CD8-positive, alpha-beta T cell (primary cell): ENCODE measurements at regions of chr1 and their contacts with region 1.

Region 1: GRCh38 chr1:40338745-40339424 is 21.8 kb upstream of the COL9A2 start:
- DNase-seq: peak; percentile 80 to 95 (median 89)
- ATAC-seq: peak; percentile 98
- H3K4me3 ChIP-seq: no peak overlapping the region
- H3K4me3 Mint-ChIP-seq: peak overlapping the region; percentile 42
- H3K27ac ChIP-seq: no peak overlapping the region
- H3K27ac Mint-ChIP-seq: peak overlapping the region; percentile 10
- H3K4me1 ChIP-seq: peaks cover 25% of the 10 kb centered on the region
- H3K4me1 Mint-ChIP-seq: peaks cover 41% of the 10 kb centered on the region
- H3K27me3 ChIP-seq: no peaks in the 10 kb centered on the region
- H3K27me3 Mint-ChIP-seq: no peaks in the 10 kb centered on the region
- CTCF ChIP-seq: peak; percentile 94

Region 2: DNA sequence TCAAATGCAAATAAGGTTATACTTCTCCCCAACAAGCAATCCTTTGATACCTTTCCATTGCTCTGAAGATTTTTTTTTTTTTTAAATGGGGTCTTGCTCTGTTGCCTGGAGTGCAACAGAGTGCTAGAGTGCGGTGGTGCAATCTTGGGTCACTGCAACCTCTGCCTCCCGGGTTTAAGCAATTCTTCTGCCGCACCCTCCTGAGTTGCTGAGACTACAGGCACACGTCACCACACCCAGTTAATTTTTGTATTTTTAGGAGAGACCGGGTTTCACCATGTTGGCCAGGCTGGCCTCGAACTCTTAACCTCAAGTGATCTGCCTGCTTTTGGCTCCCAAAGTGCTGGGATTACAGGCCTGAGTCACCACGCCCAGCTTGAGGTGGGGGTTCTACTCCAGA is 534.9 kb before region 1 on chr1:
- CTCF ChIA-PET with region 1: no interaction called
- POLR2A ChIA-PET with region 1: no interaction called
- intact Hi-C with region 1: no loop called
- DNase-seq: no peak
- ATAC-seq: no peak
- H3K4me3 ChIP-seq: no peak overlapping the region
- H3K4me3 Mint-ChIP-seq: no peak overlapping the region
- H3K27ac ChIP-seq: no peak overlapping the region
- H3K27ac Mint-ChIP-seq: no peak overlapping the region
- H3K4me1 ChIP-seq: peaks cover 2% of the 10 kb centered on the region
- H3K4me1 Mint-ChIP-seq: peaks cover 6% of the 10 kb centered on the region
- H3K27me3 ChIP-seq: no peaks in the 10 kb centered on the region
- H3K27me3 Mint-ChIP-seq: no peaks in the 10 kb centered on the region
- CTCF ChIP-seq: no peak

Region 3: DNA sequence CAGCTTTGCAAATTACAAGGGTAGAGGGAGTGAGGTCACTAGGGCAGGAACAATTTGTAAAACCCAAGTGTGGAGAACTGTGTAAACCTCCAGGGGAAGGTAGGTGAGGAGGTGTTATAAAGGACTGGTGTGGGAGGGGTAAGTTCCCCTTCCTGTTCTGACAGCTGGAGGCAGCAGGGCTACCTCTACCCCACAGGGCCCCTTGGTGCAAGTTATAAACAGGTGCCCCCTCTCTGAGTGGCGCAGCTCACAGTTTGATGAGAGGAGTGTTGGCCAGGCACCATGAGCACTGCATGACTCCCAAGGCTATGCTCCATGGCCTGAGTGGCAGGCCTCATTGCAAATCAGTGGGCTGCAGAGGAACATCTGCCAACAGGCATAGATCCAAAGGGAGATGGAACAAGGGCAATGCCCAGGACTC is 342.9 kb before region 1 on chr1:
- CTCF ChIA-PET with region 1: no interaction called
- POLR2A ChIA-PET with region 1: no interaction called
- intact Hi-C with region 1: no loop called
- DNase-seq: peak in 8 of 9 experiments; percentile 5 to 67 (median 22)
- ATAC-seq: peak; percentile 93
- H3K4me3 ChIP-seq: no peak overlapping the region
- H3K4me3 Mint-ChIP-seq: no peak overlapping the region
- H3K27ac ChIP-seq: peak overlapping the region in 1 of 2 experiments; percentile 4
- H3K27ac Mint-ChIP-seq: peak overlapping the region; percentile 30
- H3K4me1 ChIP-seq: peaks cover 11% of the 10 kb centered on the region
- H3K4me1 Mint-ChIP-seq: peaks cover 22% of the 10 kb centered on the region
- H3K27me3 ChIP-seq: no peaks in the 10 kb centered on the region
- H3K27me3 Mint-ChIP-seq: no peaks in the 10 kb centered on the region
- CTCF ChIP-seq: no peak

Region 4: GRCh38 chr1:40078512-40079333 is 260.2 kb before region 1 on chr1:
- CTCF ChIA-PET with region 1: interaction called, 46 read pairs
- POLR2A ChIA-PET with region 1: no interaction called
- intact Hi-C with region 1: loop called (anchors 1 kb)
- DNase-seq: peak in 8 of 9 experiments; percentile 13 to 77 (median 50)
- ATAC-seq: peak; percentile 89
- H3K4me3 ChIP-seq: no peak overlapping the region
- H3K4me3 Mint-ChIP-seq: no peak overlapping the region
- H3K27ac ChIP-seq: no peak overlapping the region
- H3K27ac Mint-ChIP-seq: peak overlapping the region; percentile 56
- H3K4me1 ChIP-seq: peaks cover 4% of the 10 kb centered on the region
- H3K4me1 Mint-ChIP-seq: peaks cover 11% of the 10 kb centered on the region
- H3K27me3 ChIP-seq: no peaks in the 10 kb centered on the region
- H3K27me3 Mint-ChIP-seq: no peaks in the 10 kb centered on the region
- CTCF ChIP-seq: peak; percentile 88

Region 5: DNA sequence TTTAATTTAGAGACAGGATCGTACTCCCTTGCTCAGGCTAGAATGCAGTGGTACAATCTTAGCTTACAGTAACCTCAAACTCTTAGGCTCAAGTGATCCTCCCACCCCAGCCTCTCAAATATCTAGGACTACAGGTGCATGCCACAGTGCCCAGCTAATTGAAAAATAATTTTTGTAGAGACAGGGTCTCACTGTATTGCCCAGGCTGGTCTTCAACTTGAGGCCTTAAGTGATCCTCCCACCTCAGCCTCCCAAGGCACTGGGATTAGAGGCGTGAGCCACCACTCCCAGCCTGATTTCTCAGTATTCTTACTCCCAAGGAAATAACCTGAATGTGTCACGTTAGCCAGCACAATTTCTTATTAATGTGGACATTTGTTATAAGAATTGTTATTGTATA is 167.8 kb before region 1 on chr1:
- CTCF ChIA-PET with region 1: interaction called, 10 read pairs
- POLR2A ChIA-PET with region 1: no interaction called
- intact Hi-C with region 1: no loop called
- DNase-seq: no peak
- ATAC-seq: no peak
- H3K4me3 ChIP-seq: no peak overlapping the region
- H3K4me3 Mint-ChIP-seq: no peak overlapping the region
- H3K27ac ChIP-seq: no peak overlapping the region
- H3K27ac Mint-ChIP-seq: no peak overlapping the region
- H3K4me1 ChIP-seq: peaks cover 37% of the 10 kb centered on the region
- H3K4me1 Mint-ChIP-seq: peaks cover 59% of the 10 kb centered on the region
- H3K27me3 ChIP-seq: no peaks in the 10 kb centered on the region
- H3K27me3 Mint-ChIP-seq: no peaks in the 10 kb centered on the region
- CTCF ChIP-seq: no peak

Region 6: DNA sequence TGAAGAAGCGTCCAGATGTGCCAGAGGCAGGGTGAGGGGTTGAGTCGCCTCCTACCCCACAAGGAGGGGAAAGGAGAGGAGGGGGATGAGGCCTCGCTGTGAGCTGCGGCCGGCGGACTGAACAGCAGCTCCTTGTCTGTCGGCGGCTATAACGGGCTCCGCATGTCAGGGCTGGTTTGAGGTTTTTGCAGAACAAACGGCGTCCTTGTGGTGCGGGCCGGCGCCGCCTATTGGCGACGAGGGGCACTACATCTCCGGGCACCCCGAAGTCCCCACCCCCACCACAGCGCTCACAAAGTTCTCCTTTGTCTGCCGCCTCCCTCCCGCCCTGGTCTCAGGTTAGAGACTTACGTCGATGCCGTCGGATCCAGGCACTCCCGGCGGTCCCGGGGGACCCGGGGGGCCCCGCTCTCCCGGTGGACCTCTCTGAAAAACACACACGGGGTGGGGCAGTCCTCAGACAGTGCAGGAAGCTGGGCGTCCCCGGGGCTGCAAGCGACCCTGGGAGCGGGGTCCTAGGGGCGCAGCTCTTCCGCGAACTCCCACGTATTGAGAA is 23.6 kb before region 1 on chr1:
- CTCF ChIA-PET with region 1: interaction called, 116 read pairs
- POLR2A ChIA-PET with region 1: interaction called, 5 read pairs
- intact Hi-C with region 1: loop called in 1 of 2 experiments (anchors 1 kb)
- DNase-seq: peak; percentile 71 to 92 (median 85)
- ATAC-seq: peak; percentile 81
- H3K4me3 ChIP-seq: peak overlapping the region; percentile 54 to 84
- H3K4me3 Mint-ChIP-seq: peak overlapping the region; percentile 84
- H3K27ac ChIP-seq: peak overlapping the region in 1 of 2 experiments; percentile 24
- H3K27ac Mint-ChIP-seq: peak overlapping the region; percentile 29
- H3K4me1 ChIP-seq: peaks cover 14% of the 10 kb centered on the region
- H3K4me1 Mint-ChIP-seq: peaks cover 27% of the 10 kb centered on the region
- H3K27me3 ChIP-seq: peaks cover 0 to 13% of the 10 kb centered on the region in 2 experiments
- H3K27me3 Mint-ChIP-seq: peaks cover 7% of the 10 kb centered on the region
- CTCF ChIP-seq: peak; percentile 95

Region 7: GRCh38 chr1:40385437-40386358 is 46.8 kb after region 1 on chr1:
- CTCF ChIA-PET with region 1: interaction called, 109 read pairs
- POLR2A ChIA-PET with region 1: interaction called, 4 read pairs
- intact Hi-C with region 1: no loop called
- DNase-seq: peak in 7 of 9 experiments; percentile 34 to 96 (median 64)
- ATAC-seq: peak; percentile 66
- H3K4me3 ChIP-seq: peak overlapping the region; percentile 29 to 50
- H3K4me3 Mint-ChIP-seq: peak overlapping the region; percentile 86
- H3K27ac ChIP-seq: peak overlapping the region; percentile 93 to 97
- H3K27ac Mint-ChIP-seq: peak overlapping the region; percentile 100
- H3K4me1 ChIP-seq: peaks cover 82% of the 10 kb centered on the region
- H3K4me1 Mint-ChIP-seq: peaks cover 92% of the 10 kb centered on the region
- H3K27me3 ChIP-seq: no peaks in the 10 kb centered on the region
- H3K27me3 Mint-ChIP-seq: no peaks in the 10 kb centered on the region
- CTCF ChIP-seq: no peak

Region 8: DNA sequence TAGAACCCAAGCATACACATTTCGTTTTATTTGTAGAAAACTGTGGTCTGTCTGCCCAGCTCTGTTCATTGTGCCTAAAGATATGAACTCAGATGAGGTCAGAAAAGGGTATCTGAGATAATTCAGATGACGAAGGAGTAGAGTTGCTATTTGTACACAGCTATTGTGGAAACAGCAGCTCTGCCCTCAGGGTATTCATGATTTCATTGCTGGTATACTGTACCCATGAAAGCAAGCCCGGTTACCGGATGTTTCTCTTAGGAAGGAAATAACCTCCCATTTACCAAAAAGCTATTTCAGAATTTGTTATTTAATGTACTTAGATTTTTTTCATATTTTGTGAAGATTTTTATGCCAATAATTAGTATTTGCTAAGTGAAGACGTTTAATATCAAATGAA is 72.4 kb after region 1 on chr1:
- CTCF ChIA-PET with region 1: interaction called, 158 read pairs
- POLR2A ChIA-PET with region 1: interaction called, 3 read pairs
- intact Hi-C with region 1: no loop called
- DNase-seq: peak in 1 of 9 experiments; percentile 39
- ATAC-seq: no peak
- H3K4me3 ChIP-seq: no peak overlapping the region
- H3K4me3 Mint-ChIP-seq: no peak overlapping the region
- H3K27ac ChIP-seq: peak overlapping the region in 1 of 2 experiments; percentile 25
- H3K27ac Mint-ChIP-seq: peak overlapping the region; percentile 60
- H3K4me1 ChIP-seq: peaks cover 34% of the 10 kb centered on the region
- H3K4me1 Mint-ChIP-seq: peaks cover 54% of the 10 kb centered on the region
- H3K27me3 ChIP-seq: no peaks in the 10 kb centered on the region
- H3K27me3 Mint-ChIP-seq: no peaks in the 10 kb centered on the region
- CTCF ChIP-seq: no peak

Region 9: DNA sequence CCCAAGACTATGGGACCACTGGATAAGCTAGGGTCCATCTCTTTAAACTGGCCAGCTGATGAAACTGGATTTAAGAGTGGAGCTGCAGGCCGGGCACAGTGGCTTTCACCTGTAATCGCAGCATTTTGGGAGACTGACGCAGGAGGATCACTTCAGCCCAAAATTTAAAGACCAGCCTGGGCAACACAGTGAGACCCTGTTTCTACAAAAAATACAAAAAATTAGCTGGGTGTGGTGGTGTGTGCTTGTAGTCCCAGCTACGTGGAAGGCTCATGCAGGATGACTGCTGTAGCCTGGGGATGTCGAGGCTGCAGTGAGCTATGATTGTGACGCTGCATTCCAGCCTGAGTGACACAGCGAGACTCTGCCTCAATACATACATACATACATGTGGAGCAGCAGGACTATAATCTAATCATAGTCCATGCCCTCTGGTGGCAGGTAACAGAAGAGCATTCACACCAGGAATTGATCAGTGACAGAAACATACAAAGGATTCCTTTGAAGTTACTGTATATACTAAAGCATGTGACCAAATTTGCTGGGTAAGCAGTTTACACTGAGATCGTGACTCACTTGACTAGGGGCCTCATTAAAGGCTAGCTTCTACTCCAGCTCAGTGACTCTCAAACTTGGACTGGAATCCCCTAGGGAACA is 784.1 kb after region 1 on chr1:
- CTCF ChIA-PET with region 1: no interaction called
- POLR2A ChIA-PET with region 1: no interaction called
- intact Hi-C with region 1: no loop called
- DNase-seq: peak in 2 of 9 experiments; percentile 5 to 13
- ATAC-seq: no peak
- H3K4me3 ChIP-seq: no peak overlapping the region
- H3K4me3 Mint-ChIP-seq: no peak overlapping the region
- H3K27ac ChIP-seq: no peak overlapping the region
- H3K27ac Mint-ChIP-seq: no peak overlapping the region
- H3K4me1 ChIP-seq: no peaks in the 10 kb centered on the region
- H3K4me1 Mint-ChIP-seq: no peaks in the 10 kb centered on the region
- H3K27me3 ChIP-seq: no peaks in the 10 kb centered on the region
- H3K27me3 Mint-ChIP-seq: no peaks in the 10 kb centered on the region
- CTCF ChIP-seq: no peak

Region 10: DNA sequence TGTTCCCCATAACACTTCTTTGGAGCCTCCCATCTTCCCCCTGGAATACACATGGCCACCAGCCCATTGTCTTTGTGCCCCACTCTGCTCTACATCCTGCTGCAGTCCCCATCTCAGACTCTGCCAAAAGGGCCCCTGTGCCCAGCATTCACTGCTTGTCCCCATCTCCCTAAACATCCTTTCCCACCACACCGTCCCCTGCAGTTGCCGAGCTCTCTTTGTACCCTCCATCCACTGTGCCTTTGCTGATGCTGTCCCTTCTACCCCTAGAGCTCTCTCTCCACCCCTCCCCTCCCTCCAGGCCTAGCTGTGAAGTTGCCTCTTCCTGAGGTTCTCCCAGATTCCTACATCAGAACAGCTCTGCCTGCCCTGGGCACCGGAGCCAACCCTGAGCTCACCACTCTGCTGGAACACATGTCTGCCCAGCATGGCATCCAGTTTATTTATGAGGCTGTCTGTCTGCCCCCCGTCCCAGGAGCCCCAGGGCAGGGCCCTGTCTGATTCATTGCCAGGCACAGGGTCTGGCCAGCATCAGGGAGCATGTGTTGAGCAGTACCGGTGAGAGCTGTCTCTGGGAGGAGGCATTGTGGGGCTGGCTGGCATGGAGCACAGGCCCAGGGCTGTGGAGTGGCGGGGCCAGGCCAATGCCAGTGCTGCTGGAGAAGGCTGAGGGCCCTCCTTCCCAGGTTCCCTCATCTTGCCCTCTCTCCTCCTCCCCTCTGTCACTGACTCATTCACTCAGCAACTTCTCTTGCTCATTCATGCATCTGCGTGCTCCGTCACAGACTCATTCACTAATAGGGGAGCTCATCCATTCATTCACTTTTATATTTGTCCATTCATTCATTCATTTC is 1116.8 kb after region 1 on chr1:
- CTCF ChIA-PET with region 1: no interaction called
- POLR2A ChIA-PET with region 1: no interaction called
- intact Hi-C with region 1: no loop called
- DNase-seq: no peak
- ATAC-seq: no peak
- H3K4me3 ChIP-seq: no peak overlapping the region
- H3K4me3 Mint-ChIP-seq: no peak overlapping the region
- H3K27ac ChIP-seq: no peak overlapping the region
- H3K27ac Mint-ChIP-seq: no peak overlapping the region
- H3K4me1 ChIP-seq: no peaks in the 10 kb centered on the region
- H3K4me1 Mint-ChIP-seq: no peaks in the 10 kb centered on the region
- H3K27me3 ChIP-seq: no peaks in the 10 kb centered on the region
- H3K27me3 Mint-ChIP-seq: peaks cover 2% of the 10 kb centered on the region
- CTCF ChIP-seq: no peak